GM10248 (cell line): ENCODE measurements at regions of chr2 and their contacts with region 1.

Region 1: DNA sequence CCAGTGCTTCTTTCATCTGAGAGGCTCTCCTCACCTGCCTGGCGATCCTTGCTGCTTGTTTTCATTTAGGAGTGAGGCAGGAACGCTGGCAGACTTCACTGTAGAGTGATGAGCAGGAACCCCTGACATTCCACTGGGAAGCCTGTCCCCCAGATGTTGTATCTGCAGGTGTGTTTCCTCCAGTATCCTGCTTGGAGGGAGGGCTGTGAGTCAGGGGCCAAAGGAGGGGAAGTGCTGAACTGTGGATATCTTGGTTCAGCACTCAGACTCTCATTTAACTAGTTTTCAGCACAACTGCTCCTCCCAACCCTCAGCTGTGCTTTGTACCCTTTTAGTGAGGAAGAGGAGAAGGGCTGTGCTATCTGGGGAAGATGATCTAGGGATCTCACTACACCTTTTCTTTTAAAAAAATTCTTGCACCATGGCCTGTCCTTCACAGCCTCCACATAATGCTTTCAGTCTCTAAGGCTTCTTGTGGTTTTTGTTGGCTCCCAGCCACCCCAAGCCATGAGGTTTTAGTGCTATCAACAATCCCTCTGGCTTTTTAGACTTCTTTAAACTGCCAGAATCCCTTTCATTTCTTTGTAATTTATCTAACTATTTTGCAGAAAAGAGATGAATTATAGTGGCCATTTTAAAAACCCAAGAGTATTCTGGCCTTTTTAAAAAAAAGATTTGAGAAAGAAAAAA is 11.2 kb downstream of the ANKAR start:
- DNase-seq: no peak
- CTCF ChIP-seq: no peak

Region 2: DNA sequence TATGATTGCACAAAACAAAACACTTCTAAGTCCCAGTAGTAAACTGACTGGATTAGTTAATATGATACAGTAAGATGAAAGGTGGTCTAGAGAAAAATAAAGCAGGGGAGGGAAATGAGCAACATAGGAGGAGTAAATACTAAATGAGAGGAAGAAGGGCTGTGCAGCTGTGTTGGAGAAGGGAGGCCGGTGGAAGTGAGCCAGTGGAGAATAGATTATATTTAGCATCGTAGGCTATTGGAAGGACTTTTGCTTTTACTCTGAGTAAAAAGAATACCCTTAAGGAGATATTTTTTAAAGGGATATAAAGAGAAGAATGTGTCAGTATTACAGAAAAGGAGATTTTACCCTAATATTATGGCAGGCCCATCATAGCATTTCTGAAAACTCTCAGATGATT is 231.7 kb before region 1 on chr2:
- CTCF ChIA-PET with region 1: no interaction called
- POLR2A ChIA-PET with region 1: no interaction called
- DNase-seq: no peak
- CTCF ChIP-seq: no peak

Region 3: GRCh38 chr2:189674374-189675112 is 11.1 kb before region 1 on chr2 and contains the start of gene ANKAR:
- CTCF ChIA-PET with region 1: interaction called, 67 read pairs
- POLR2A ChIA-PET with region 1: no interaction called
- DNase-seq: peak; percentile 90
- CTCF ChIP-seq: peak; percentile 84

Region 4: DNA sequence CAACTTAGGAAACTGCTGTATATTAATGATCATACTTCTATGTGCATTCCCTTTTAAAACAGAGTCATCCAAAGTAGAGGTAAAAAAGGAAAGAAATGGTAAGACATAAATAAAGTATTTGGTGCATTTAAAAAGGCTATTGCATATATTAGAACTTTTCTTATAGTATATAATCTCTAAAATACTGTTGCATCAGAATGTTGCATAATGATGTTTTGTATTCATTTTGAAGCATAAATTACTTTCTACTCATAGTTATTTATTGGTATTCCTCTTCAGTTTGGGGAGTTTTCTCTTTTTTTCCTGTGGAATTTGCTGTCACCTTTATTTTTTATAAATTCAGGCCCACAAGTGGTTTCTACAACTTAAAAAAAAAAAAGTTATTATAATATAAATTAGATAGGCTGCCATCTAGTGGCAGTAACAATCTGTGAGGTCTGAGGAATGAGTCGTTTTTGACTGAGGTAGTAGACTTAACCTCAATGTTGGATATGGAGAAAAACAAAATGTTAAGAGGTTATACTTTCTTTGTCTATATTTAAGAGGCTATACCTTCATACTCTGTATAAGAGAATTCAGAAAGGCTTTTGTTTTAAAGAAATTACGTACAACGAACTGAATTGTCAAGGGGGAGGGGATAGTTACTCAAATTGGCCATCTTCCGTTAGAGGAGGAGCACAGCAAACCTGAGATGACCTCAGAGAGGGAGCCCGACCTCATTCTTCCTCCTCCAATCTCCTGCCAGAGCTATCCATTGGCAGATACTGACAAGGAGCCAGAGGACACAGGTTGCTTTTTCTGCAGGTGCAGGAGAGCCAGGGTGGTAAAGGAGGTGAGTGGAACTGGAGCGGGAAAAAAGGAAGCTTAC is 12.6 kb after region 1 on chr2:
- CTCF ChIA-PET with region 1: interaction called, 14 read pairs
- POLR2A ChIA-PET with region 1: no interaction called
- DNase-seq: peak; percentile 26
- CTCF ChIP-seq: peak; percentile 48

Region 5: GRCh38 chr2:189762551-189763298 is 77.0 kb after region 1 on chr2 and contains the start of gene OSGEPL1:
- CTCF ChIA-PET with region 1: interaction called, 11 read pairs
- POLR2A ChIA-PET with region 1: no interaction called
- DNase-seq: peak; percentile 82
- CTCF ChIP-seq: peak; percentile 68